PC-3 (cell line): ENCODE measurements at regions of chr2 and their contacts with region 1.

Region 1: GRCh38 chr2:42238644-42239288 is 69.6 kb downstream of the EML4 start:
- DNase-seq: peak; percentile 52
- ATAC-seq: peak; percentile 82
- H3K4me3 ChIP-seq: no peak overlapping the region
- H3K27ac ChIP-seq: peak overlapping the region; percentile 61
- H3K4me1 ChIP-seq: peaks cover 15% of the 10 kb centered on the region
- H3K27me3 ChIP-seq: no peaks in the 10 kb centered on the region
- CTCF ChIP-seq: peak; percentile 73

Region 2: DNA sequence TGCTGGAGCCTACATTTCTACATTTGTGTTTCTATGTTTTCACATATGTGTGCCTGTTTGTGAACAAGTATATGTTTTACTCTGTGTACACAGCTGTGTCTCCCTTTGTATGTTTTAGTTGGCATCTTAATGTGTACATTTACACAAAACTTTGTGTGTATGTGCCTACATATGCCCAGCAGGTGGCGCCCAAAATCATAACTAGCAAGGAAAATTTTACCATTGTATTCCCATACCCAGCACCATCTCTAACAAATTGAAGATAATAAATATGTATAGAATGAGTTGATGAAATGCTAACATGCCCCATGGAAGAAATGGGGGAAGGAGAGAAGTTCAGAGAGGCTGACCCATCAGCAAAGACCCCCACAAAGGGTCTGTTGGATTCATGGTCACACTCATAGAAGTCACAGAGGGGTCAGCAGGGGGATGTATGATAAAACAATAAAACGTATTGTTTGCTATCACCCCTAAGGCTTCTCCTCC is 142.8 kb before region 1 on chr2:
- CTCF ChIA-PET with region 1: interaction called, 3 read pairs
- POLR2A ChIA-PET with region 1: no interaction called
- intact Hi-C with region 1: loop called (anchors 1 kb)
- DNase-seq: peak; percentile 86
- ATAC-seq: peak; percentile 52
- H3K4me3 ChIP-seq: no peak overlapping the region
- H3K27ac ChIP-seq: no peak overlapping the region
- H3K4me1 ChIP-seq: peaks cover 6% of the 10 kb centered on the region; the same call in 1 of the 2 replicates
- H3K27me3 ChIP-seq: no peaks in the 10 kb centered on the region
- CTCF ChIP-seq: peak; percentile 92

Region 3: GRCh38 chr2:42200926-42201855 is 37.6 kb before region 1 on chr2:
- CTCF ChIA-PET with region 1: no interaction called
- POLR2A ChIA-PET with region 1: no interaction called
- intact Hi-C with region 1: no loop called
- DNase-seq: no peak
- ATAC-seq: no peak
- H3K4me3 ChIP-seq: no peak overlapping the region
- H3K27ac ChIP-seq: no peak overlapping the region
- H3K4me1 ChIP-seq: peaks cover 5% of the 10 kb centered on the region
- H3K27me3 ChIP-seq: no peaks in the 10 kb centered on the region
- CTCF ChIP-seq: no peak